ENCODE measurements at regions of chr20 and their contacts with region 1.

Region 1: GRCh38 chr20:62065669-62066338 is at the start of gene TAF4:
- H3K4me3 ChIP-seq: peak within 1 kb of the TSS; percentile 74
- H3K27ac ChIP-seq: peak within 1 kb of the TSS; percentile 76; the same call in 1 of the 2 replicates
- H3K4me1 ChIP-seq: no peaks in the 10 kb centered on the region
- CTCF ChIP-seq: no peak

Region 2: DNA sequence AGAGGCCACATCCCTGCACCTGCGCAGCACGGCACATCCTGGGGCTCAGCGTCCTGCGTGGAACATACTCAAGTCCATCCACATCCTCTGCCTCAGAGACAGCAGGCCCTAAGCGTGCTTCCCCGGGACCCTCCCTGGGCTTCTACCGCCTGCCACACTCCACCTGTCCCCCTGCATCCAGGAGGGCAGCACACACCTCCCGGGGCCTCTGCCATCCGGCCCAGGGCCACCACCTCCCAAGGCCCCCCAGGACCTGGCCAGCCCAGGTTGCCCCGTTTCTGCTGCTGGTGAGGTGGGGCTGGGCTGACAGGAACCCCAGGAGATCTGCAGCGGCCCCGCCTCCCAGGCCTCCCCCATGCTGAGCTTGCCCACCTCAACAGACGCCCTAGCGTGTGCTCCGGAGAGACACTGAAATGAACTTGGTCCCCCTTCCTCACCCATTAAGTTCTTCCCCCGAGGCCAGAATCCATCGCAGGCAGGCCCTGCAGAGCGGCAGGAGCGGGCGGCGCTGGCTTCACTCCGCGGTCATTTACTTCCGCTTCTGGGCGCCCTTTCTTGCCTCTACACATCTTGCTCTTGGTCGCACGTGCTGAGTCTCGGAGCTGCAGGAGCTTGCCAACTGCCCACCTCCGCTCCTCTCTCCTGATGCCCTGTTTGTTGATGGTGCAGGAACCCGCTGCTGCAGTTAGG is 235.4 kb before region 1 on chr20:
- CTCF ChIA-PET with region 1: no interaction called
- POLR2A ChIA-PET with region 1: no interaction called
- H3K4me3 ChIP-seq: no peak overlapping the region
- H3K27ac ChIP-seq: no peak overlapping the region
- H3K4me1 ChIP-seq: no peaks in the 10 kb centered on the region
- CTCF ChIP-seq: no peak

Region 3: DNA sequence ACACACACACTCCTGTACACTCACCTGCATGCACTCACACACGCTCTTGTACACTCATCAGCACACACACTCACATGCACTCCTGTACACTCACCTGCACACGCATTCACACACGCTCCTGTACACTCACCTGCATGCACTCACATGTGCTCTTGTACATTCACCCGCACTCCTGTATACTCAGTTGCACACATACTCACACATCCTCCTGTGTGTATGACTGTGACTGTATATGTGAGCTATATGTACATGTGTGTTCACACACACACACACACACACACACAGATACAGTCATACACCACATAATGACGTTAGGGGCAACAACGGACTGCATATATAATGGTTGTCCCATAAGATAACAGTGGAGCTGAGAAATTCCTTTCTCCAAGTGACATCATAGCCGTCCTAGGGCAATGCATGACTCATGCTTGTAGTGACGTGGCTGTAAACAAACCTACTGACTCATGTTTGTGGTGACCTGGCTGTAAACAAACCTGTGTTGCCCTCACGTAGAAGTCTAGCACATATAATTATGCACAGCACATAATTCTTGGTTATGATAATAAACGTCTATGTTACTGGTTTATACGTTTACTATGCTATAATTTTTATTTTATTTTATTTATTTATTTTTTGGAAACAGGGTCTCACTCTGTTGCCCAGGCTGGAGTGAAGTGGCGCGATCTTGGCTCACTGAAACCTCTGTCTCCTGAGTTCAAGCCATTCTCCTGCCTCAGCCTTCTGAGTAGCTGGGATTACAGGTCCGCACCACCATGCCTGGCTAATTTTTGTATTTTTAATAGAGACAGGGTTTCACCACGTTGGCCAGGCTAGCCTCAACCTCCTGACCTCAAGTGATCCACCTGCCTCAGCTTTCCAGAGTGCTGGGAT is 22.7 kb after region 1 on chr20:
- CTCF ChIA-PET with region 1: no interaction called
- POLR2A ChIA-PET with region 1: no interaction called
- H3K4me3 ChIP-seq: no peak overlapping the region
- H3K27ac ChIP-seq: no peak overlapping the region
- H3K4me1 ChIP-seq: no peaks in the 10 kb centered on the region
- CTCF ChIP-seq: no peak

Region 4: DNA sequence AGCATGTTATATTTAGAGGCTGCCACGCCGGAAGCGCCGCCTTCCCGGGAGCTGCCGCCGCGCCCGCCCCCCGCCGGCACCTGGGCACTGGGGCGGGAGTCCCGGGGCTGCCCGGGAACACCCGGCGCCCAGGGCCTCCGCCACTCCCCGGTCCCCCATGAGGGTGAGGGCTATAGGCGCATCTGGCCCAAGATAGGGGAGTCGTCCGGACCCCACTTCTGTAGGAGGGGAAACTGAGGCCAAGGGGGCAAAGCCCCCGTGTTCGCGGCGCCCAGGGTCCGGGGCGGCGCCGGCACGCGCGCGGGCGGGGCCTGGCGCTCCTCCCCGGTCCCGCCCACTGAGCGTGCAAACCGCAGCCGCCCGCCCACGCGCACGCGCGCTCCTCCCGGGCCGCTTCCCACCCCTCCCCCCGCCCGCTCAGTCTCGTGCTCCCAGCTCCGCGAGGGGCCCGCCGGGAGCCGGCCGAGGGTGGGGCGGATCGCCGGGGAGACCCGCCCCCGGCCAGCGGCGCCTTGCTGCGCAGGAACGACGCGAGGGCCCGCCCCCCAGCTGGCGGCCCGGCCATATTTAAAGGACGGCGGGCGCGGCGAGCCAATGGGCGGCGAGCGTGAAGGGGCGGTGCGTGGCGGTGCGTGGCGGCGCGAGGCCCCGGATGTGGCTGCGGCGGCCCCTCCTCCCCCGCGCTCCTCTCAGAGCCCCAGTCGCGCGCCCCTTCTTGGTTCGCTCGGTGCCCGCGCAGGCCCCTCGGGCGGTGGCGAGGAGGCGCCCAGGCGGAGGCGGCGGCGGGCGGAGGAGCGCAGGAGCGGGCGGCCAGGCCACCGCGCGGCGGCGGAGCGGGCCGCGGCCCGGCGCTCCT is 56.2 kb after region 1 on chr20 and contains the start of gene LSM14B:
- CTCF ChIA-PET with region 1: no interaction called
- POLR2A ChIA-PET with region 1: interaction called, 22 read pairs
- H3K4me3 ChIP-seq: peak within 1 kb of the TSS; percentile 80
- H3K27ac ChIP-seq: peak within 1 kb of the TSS; percentile 85
- H3K4me1 ChIP-seq: no peaks in the 10 kb centered on the region
- CTCF ChIP-seq: no peak

Region 5: GRCh38 chr20:62136283-62137091 is 70.7 kb after region 1 on chr20:
- CTCF ChIA-PET with region 1: no interaction called
- POLR2A ChIA-PET with region 1: interaction called, 15 read pairs
- H3K4me3 ChIP-seq: no peak overlapping the region
- H3K27ac ChIP-seq: peak overlapping the region; percentile 42; the same call in 1 of the 2 replicates
- H3K4me1 ChIP-seq: no peaks in the 10 kb centered on the region
- CTCF ChIP-seq: peak; percentile 57

Measured in HEK293 (cell line).